OCI-LY7 (cell line): ENCODE measurements at regions of chr5 and their contacts with region 1.

Region 1: DNA sequence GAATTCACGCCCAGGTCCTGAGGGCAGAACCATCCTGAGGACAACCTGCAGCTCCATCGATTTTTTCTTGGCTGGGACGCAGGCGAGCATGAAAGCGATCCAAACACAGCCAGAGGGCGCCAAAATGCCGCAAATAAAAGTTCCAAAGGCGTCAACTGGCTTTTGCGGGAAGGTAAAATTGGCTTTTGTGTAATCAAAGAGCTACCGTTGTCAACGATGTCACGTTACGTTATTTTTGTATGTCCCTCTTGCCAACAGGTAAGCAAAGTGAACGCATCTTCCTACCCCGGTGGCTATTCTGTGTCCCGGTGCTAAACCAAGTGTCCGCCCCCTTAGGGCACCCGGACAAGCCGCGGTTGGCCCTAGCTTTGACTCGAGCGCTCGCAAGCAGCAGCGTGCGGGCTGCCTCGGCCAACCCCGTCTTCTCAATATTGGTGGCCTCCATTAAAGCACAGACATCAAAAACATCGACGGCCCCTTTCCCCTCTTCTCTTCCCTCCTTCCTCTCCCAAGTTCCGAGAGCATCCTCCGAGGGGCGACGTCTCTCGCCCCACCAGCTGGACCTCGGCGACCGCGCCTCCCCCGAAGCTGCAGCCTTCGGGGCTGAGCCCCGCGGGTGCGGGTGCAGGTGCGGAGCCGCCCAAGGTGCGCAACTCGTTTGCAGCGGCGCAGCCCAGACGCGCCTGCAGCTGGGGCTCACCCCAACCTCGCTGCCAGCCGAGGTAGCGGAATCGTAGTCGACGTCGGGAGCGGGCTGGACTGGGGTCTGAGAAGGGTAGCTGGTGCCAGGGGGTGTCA is 1.1 kb upstream of the BASP1 start:
- DNase-seq: peak; percentile 91
- H3K4me3 ChIP-seq: peak overlapping the region; percentile 96
- H3K27ac ChIP-seq: peak overlapping the region; percentile 67
- H3K4me1 ChIP-seq: peaks cover 58% of the 10 kb centered on the region
- CTCF ChIP-seq: peak; percentile 91

Region 2: GRCh38 chr5:17190242-17190778 is 26.1 kb before region 1 on chr5:
- CTCF ChIA-PET with region 1: no interaction called
- POLR2A ChIA-PET with region 1: no interaction called
- intact Hi-C with region 1: no loop called
- DNase-seq: peak; percentile 50
- H3K4me3 ChIP-seq: no peak overlapping the region
- H3K27ac ChIP-seq: no peak overlapping the region
- H3K4me1 ChIP-seq: no peaks in the 10 kb centered on the region
- CTCF ChIP-seq: peak; percentile 97

Region 3: GRCh38 chr5:17282283-17283120 is 66.1 kb after region 1 on chr5:
- CTCF ChIA-PET with region 1: no interaction called
- POLR2A ChIA-PET with region 1: interaction called, 3 read pairs
- intact Hi-C with region 1: loop called (anchors 2 kb)
- DNase-seq: peak; percentile 92
- H3K4me3 ChIP-seq: peak overlapping the region; percentile 64
- H3K27ac ChIP-seq: peak overlapping the region; percentile 94
- H3K4me1 ChIP-seq: peaks cover 81% of the 10 kb centered on the region
- CTCF ChIP-seq: no peak

Region 4: GRCh38 chr5:17400724-17401464 is 184.5 kb after region 1 on chr5:
- CTCF ChIA-PET with region 1: no interaction called
- POLR2A ChIA-PET with region 1: interaction called, 3 read pairs
- intact Hi-C with region 1: loop called (anchors 5 kb)
- DNase-seq: no peak
- H3K4me3 ChIP-seq: no peak overlapping the region
- H3K27ac ChIP-seq: no peak overlapping the region
- H3K4me1 ChIP-seq: peaks cover 12% of the 10 kb centered on the region
- CTCF ChIP-seq: no peak

Region 5: GRCh38 chr5:17463653-17464052 is 247.3 kb after region 1 on chr5:
- CTCF ChIA-PET with region 1: no interaction called
- POLR2A ChIA-PET with region 1: no interaction called
- intact Hi-C with region 1: loop called (anchors 5 kb)
- DNase-seq: no peak
- H3K4me3 ChIP-seq: no peak overlapping the region
- H3K27ac ChIP-seq: no peak overlapping the region
- H3K4me1 ChIP-seq: no peaks in the 10 kb centered on the region
- CTCF ChIP-seq: no peak